ENCODE measurements at regions of chr1 and their contacts with region 1.

Region 1: GRCh38 chr1:21963477-21964217 is 13.2 kb upstream of the CELA3B start:
- DNase-seq: no peak
- H3K4me3 ChIP-seq: no peak overlapping the region
- H3K27ac ChIP-seq: no peak overlapping the region
- H3K4me1 ChIP-seq: peaks cover 6 to 15% (median 11%) of the 10 kb centered on the region in 4 donors
- H3K27me3 ChIP-seq: no peaks in the 10 kb centered on the region
- CTCF ChIP-seq: peak in 2 of 3 experiments; percentile 89 to 96
- EP300 ChIP-seq: no peak
- POLR2A ChIP-seq: no peak

Region 2: DNA sequence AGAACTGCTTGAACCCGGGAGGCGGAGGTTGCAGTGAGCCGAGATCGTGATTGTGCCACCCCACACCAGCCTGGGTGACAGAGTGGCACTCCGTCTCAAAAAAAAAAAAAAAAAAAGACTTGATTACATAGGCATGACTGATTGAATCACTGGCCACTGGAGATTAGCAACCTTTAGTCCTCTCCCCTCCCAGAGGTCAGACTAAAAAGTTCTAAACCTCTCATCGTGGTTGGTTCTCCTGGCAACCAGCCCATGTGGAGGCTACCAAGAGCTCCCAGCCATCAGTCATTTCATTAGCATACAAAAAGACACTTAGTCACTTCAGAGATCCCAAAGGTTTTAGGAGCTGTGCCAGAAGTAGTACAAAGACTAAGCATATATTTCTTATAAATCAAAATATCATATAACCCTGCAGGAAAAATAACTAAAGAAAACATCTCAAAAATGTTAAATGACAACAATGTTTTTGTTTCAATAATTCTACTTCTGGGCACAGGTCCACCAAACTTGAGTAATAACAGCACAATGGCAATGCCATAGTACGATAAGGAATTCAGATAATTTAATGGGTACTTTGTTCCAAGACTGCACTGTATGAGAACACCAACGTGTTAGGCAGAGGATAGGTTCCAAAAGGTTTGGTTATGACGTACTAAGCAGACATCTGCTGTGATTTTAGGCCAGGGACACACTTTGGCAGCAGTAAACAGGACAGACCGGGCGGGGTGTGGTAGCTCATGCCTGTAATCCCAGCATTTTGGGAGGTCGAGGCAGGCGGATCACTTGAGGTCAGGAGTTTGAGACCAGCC is 198.8 kb before region 1 on chr1:
- intact Hi-C with region 1: loop called (anchors 10 kb)
- DNase-seq: no peak
- H3K4me3 ChIP-seq: no peak overlapping the region
- H3K27ac ChIP-seq: peak overlapping the region; percentile 49 to 72 (median 68)
- H3K4me1 ChIP-seq: peaks cover 43 to 76% (median 52%) of the 10 kb centered on the region in 4 donors
- H3K27me3 ChIP-seq: no peaks in the 10 kb centered on the region
- CTCF ChIP-seq: no peak
- EP300 ChIP-seq: no peak
- POLR2A ChIP-seq: no peak

Region 3: DNA sequence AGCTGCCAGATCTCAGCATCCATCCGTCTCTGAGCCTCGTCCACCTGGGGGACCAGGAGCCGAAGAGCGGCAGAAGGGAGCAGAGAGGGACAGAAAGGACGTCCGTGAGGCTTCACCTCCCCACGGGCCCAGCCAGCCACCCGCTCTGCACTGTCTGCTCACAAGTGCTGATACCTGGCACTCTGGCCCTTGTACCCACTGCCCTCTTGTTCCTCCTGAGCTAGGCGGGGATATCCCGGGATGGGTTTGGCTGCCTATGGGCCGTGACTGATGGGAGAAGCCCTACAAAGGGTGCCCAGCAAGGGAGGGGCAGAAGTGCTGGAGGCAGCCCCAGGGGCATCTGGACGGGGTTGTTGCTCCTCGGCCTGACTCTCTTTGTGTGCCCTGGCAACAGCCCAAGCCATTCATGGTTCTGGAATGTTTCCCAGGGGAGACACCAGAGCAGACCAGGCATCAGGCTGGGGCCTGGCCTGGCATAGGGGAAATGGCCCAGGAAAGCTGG is 94.0 kb before region 1 on chr1:
- intact Hi-C with region 1: loop called (anchors 2 kb)
- DNase-seq: peak; percentile 93
- H3K4me3 ChIP-seq: no peak overlapping the region
- H3K27ac ChIP-seq: peak overlapping the region; percentile 77 to 87 (median 82)
- H3K4me1 ChIP-seq: peaks cover 16 to 59% (median 47%) of the 10 kb centered on the region in 4 donors
- H3K27me3 ChIP-seq: no peaks in the 10 kb centered on the region
- CTCF ChIP-seq: no peak
- EP300 ChIP-seq: no peak
- POLR2A ChIP-seq: no peak

Region 4: DNA sequence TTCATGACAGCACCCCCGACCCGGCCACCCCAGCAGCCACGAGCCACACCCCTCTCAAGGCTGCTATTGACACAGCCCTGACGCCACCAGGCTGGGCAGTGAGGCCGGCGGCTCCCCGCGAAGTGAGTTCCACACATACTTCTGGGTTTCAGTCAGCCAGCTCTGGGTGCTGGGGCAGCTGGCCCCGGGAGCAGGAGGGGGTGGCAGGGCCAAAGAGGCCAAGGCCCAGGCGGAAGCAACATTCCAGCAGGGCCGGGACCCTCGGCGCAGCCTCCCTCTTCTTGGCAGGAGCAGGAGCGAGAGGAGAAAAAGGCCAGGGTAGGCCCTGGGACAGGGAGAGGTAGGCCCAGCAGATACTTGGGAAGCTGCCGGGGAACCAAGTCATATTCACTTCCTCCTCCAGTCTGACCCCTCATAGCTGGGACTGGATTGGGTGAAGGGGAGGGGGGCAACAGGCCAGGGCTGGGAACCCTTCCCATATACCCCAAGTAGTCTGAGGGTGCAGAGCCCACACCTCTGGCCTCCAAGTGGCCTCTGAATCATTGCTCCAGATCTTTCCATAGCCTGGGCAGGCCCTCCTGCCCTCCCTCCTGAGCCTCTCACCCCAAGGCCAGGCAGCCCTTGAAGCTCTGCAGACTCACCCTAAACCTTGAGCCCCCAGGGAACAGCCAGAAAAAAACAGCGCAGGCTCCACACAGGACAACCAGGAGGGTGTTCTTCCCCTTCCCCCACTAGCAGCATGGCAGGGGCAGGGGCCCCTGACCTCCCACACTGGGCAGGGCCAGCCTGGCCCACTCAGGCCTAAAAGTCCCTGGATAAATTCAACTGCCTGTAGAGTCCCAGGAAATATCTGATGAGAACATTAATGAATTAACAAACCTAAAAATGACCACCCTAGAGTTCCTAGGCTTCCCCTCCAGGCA is 32.2 kb before region 1 on chr1:
- intact Hi-C with region 1: no loop called
- DNase-seq: no peak
- H3K4me3 ChIP-seq: peak overlapping the region; percentile 9 to 89 (median 32)
- H3K27ac ChIP-seq: peak overlapping the region; percentile 93 to 99 (median 98)
- H3K4me1 ChIP-seq: peaks cover 83 to 99% (median 97%) of the 10 kb centered on the region in 4 donors
- H3K27me3 ChIP-seq: no peaks in the 10 kb centered on the region
- CTCF ChIP-seq: no peak
- EP300 ChIP-seq: peak; percentile 58
- POLR2A ChIP-seq: no peak

Region 5: DNA sequence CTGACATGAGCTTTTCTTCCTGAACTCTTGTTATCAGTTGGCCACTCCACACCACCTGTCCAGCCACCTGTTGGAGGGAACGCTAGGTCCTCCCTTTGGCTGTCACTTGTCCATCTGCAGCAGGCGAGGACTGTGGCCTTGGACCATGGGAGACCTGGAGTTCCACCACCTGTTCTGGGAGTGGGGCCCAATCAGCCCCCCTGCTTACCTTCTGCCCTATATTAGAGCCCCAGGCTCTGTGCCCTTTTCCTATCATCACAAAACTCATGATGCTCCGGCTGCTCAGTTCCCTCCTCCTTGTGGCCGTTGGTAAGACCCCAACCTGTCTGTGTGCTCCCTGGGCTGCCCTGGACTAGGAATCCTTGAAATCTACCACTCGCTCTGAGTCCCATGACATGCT is 37.8 kb after region 1 on chr1 and contains the start of gene CELA3A:
- intact Hi-C with region 1: no loop called
- DNase-seq: no peak
- H3K4me3 ChIP-seq: no peak within 1 kb of the TSS
- H3K27ac ChIP-seq: no peak within 1 kb of the TSS
- H3K4me1 ChIP-seq: no peaks in the 10 kb centered on the region
- H3K27me3 ChIP-seq: no peaks in the 10 kb centered on the region
- CTCF ChIP-seq: no peak
- EP300 ChIP-seq: no peak
- POLR2A ChIP-seq: no peak
- total RNA-seq, gene CELA3A: not detected